Ovary (tissue), 10 donors: ENCODE measurements at regions of chr14 and their contacts with region 1.

Region 1: DNA sequence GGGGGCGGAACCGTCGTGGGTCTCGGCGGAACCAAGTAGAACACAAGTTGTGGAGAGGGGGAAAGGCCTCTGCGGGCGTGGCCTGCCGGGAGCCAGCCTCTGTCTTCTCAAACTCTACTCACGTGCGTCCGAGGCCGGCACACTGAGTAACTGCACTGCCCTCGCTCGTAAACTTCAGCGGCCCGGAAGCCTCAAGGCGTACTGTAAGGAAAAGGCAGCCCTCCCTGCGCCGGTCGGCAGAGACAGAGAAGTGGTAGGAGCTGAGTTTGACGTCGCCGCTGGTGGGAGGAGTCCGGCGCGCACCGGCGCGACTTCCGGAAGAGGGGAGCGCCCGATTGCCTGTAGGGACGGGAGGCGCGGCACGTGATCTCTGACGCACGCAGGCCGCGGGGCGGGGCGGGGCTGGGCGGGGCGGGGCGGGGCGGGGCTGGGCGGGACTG is at the start of gene FBXO33:
- DNase-seq: peak; percentile 95 to 98 (median 96)
- H3K4me3 ChIP-seq: peak within 1 kb of the TSS; percentile 83
- H3K27ac ChIP-seq: peak within 1 kb of the TSS; percentile 93 to 98
- H3K4me1 ChIP-seq: peaks cover 3% of the 10 kb centered on the region
- H3K27me3 ChIP-seq: no peaks in the 10 kb centered on the region
- CTCF ChIP-seq: peak in 1 of 3 donors; percentile 28
- EP300 ChIP-seq: peak; percentile 61
- POLR2A ChIP-seq: no peak
- total RNA-seq, gene FBXO33: 7.8 to 22.2 (median 9.0) TPM

Region 2: GRCh38 chr14:39102969-39103957 is 328.9 kb before region 1 on chr14 and contains the start of gene SEC23A:
- intact Hi-C with region 1: loop called in 1 of 4 experiments (anchors 2 kb)
- DNase-seq: peak; percentile 86 to 91 (median 89)
- H3K4me3 ChIP-seq: peak within 1 kb of the TSS; percentile 77
- H3K27ac ChIP-seq: peak within 1 kb of the TSS; percentile 85 to 97
- H3K4me1 ChIP-seq: peaks cover 2% of the 10 kb centered on the region
- H3K27me3 ChIP-seq: no peaks in the 10 kb centered on the region
- CTCF ChIP-seq: no peak
- EP300 ChIP-seq: no peak
- POLR2A ChIP-seq: peak; percentile 76
- total RNA-seq, gene SEC23A: 52.9 to 93.2 (median 87.3) TPM

Region 3: GRCh38 chr14:39266871-39267591 is 165.2 kb before region 1 on chr14:
- intact Hi-C with region 1: loop called in 1 of 4 experiments (anchors 5 kb)
- DNase-seq: peak; percentile 77 to 86 (median 79)
- H3K4me3 ChIP-seq: peak overlapping the region; percentile 80
- H3K27ac ChIP-seq: peak overlapping the region; percentile 96 to 97
- H3K4me1 ChIP-seq: peaks cover 1% of the 10 kb centered on the region
- H3K27me3 ChIP-seq: no peaks in the 10 kb centered on the region
- CTCF ChIP-seq: no peak
- EP300 ChIP-seq: no peak
- POLR2A ChIP-seq: peak; percentile 46

Region 4: GRCh38 chr14:39499514-39499913 is 67.3 kb after region 1 on chr14:
- intact Hi-C with region 1: no loop called
- DNase-seq: no peak
- H3K4me3 ChIP-seq: no peak overlapping the region
- H3K27ac ChIP-seq: no peak overlapping the region
- H3K4me1 ChIP-seq: no peaks in the 10 kb centered on the region
- H3K27me3 ChIP-seq: no peaks in the 10 kb centered on the region
- CTCF ChIP-seq: no peak
- EP300 ChIP-seq: no peak
- POLR2A ChIP-seq: no peak